Uterus (tissue), 4 donors: ENCODE measurements at regions of chr1 and their contacts with region 1.

Region 1: DNA sequence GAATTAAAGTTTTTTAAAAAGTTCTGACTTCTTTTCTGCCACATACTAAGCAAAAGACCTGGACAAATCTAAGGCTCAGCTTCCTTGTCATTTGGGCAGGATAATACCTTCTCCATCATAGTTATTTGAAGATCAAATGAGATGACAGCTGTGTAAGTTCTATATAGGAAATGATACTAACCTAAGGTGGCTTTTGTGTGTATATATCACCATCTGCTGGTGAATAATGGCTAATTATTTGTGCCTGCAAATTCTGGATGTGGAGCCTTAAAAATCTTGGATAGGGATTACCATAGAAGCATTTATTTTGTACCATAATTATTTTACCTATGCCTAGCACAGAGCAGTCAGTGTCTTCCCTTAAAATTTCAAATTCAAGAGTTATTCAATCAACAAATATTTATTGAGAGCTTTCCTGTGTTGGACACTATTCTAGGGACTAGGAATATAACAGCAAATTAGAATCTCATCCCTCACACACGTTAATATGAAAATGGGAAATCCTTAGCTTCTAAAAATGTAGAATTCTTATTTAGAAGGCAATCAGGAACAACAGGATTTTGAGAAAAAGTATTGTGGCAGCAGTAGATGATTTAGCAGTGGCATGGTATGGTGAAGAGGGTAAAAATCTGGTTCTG is 89.8 kb downstream of the TMEM200B start:
- DNase-seq: no peak
- H3K4me3 ChIP-seq: no peak overlapping the region
- H3K27ac ChIP-seq: no peak overlapping the region
- H3K4me1 ChIP-seq: no peaks in the 10 kb centered on the region
- H3K27me3 ChIP-seq: no peaks in the 10 kb centered on the region
- CTCF ChIP-seq: peak; percentile 66 to 86 (median 78)
- POLR2A ChIP-seq: no peak

Region 2: DNA sequence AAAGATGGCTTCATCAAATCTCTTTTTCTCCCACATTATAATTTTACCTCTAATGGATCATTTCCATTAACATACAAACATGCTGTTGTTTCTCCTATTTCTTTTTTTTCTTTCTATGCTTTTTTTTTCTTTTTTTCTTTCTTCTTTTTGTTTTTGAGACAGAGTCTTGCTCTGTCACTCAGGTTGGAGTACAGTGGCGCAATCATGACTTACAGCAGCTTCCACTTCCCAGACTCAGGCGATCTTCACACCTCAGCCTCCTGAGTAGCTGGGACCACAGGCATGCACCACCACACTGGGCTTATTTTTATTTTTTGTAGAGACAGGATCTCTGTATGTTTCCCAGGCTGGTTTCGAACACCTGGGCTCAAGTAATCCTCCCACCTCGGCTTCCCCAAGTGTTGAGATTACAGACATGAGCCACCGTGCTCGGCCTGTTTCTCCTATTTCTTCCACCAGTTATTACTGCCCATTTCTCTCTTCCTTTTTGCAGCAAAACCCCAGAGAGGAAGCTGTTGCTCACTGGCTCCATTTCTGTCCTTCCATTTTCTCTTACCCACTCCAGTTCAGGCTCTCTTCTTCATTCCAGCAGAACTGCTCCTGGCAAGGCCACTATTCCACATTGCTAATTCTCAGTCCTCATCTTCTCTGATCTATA is 254.1 kb before region 1 on chr1:
- intact Hi-C with region 1: loop called (anchors 10 kb)
- DNase-seq: no peak
- H3K4me3 ChIP-seq: no peak overlapping the region
- H3K27ac ChIP-seq: no peak overlapping the region
- H3K4me1 ChIP-seq: no peaks in the 10 kb centered on the region
- H3K27me3 ChIP-seq: no peaks in the 10 kb centered on the region
- CTCF ChIP-seq: no peak
- POLR2A ChIP-seq: no peak

Region 3: GRCh38 chr1:28882009-28882628 is 151.8 kb before region 1 on chr1:
- intact Hi-C with region 1: loop called (anchors 5 kb)
- DNase-seq: peak; percentile 89 to 90
- H3K4me3 ChIP-seq: no peak overlapping the region
- H3K27ac ChIP-seq: peak overlapping the region in 1 of 2 donors; percentile 24
- H3K4me1 ChIP-seq: no peaks in the 10 kb centered on the region
- H3K27me3 ChIP-seq: no peaks in the 10 kb centered on the region
- CTCF ChIP-seq: peak; percentile 93 to 97 (median 97)
- POLR2A ChIP-seq: peak in 1 of 2 donors; percentile 18